Right cardiac atrium (tissue), 5 donors: ENCODE measurements at regions of chr22 and their contacts with region 1.

Region 1: GRCh38 chr22:21952586-21953571 is at the start of gene PPM1F:
- DNase-seq: peak; percentile 87 to 95 (median 95)
- ATAC-seq: peak; percentile 82 to 83
- H3K4me3 ChIP-seq: peak within 1 kb of the TSS; percentile 77
- H3K27ac ChIP-seq: peak within 1 kb of the TSS; percentile 77
- H3K4me1 ChIP-seq: peaks cover 9% of the 10 kb centered on the region
- H3K27me3 ChIP-seq: no peaks in the 10 kb centered on the region
- total RNA-seq, gene PPM1F: 19.7 to 25.5 (median 22.0) TPM

Region 2: GRCh38 chr22:21712894-21713712 is 239.8 kb before region 1 on chr22:
- intact Hi-C with region 1: loop called in 2 of 4 experiments (anchors 5 kb)
- DNase-seq: peak; percentile 64 to 85 (median 77)
- ATAC-seq: peak; percentile 92 to 93
- H3K4me3 ChIP-seq: no peak overlapping the region
- H3K27ac ChIP-seq: no peak overlapping the region
- H3K4me1 ChIP-seq: no peaks in the 10 kb centered on the region
- H3K27me3 ChIP-seq: no peaks in the 10 kb centered on the region